ENCODE measurements at regions of chr3 and their contacts with region 1.

Region 1: GRCh38 chr3:114152519-114153151 is 26.2 kb downstream of the DRD3 start:
- DNase-seq: peak; percentile 70 to 76
- ATAC-seq: peak; percentile 81 to 87
- H3K4me3 ChIP-seq: peak overlapping the region; percentile 42
- H3K27ac ChIP-seq: peak overlapping the region; percentile 67 to 84
- H3K4me1 ChIP-seq: no peaks in the 10 kb centered on the region
- CTCF ChIP-seq: peak; percentile 89
- EP300 ChIP-seq: no peak
- POLR2A ChIP-seq: no peak
- RAD21 ChIP-seq: peak; percentile 86 to 90

Region 2: GRCh38 chr3:114168150-114168549 is 15.5 kb after region 1 on chr3:
- CTCF ChIA-PET with region 1: interaction called, 27 read pairs
- POLR2A ChIA-PET with region 1: no interaction called
- DNase-seq: no peak
- ATAC-seq: no peak
- H3K4me3 ChIP-seq: no peak overlapping the region
- H3K27ac ChIP-seq: no peak overlapping the region
- H3K4me1 ChIP-seq: no peaks in the 10 kb centered on the region
- CTCF ChIP-seq: no peak
- EP300 ChIP-seq: no peak
- POLR2A ChIP-seq: no peak
- RAD21 ChIP-seq: no peak

Region 3: DNA sequence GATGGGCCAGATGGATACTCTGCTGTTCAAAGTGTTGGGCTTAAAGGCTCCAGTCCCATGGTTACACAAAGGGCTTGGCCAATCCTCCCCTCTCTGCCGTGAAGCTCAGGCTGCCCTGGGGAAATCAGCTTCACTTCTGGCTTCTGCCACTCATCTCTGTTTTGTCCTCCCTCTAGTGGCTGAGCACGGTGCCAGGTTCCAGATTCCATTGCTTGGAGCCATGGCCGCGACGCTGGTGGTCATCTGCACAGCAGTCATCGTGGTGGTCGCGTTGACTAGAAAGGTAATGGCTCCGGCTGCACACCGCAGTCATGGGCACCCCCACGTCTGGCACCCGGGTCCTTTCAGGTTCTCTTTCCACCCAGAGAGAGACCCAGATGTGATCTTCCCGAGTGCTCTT is 146.8 kb after region 1 on chr3:
- CTCF ChIA-PET with region 1: interaction called, 11 read pairs
- POLR2A ChIA-PET with region 1: no interaction called
- DNase-seq: peak; percentile 58 to 79
- ATAC-seq: peak; percentile 95 to 99
- H3K4me3 ChIP-seq: 0 out of 3 replicates have a peak overlapping the region, but pooled peaks have one; percentile 8
- H3K27ac ChIP-seq: 0 out of 6 replicates have a peak overlapping the region, but pooled peaks of 1 of the 2 experiments have one; percentile 40
- H3K4me1 ChIP-seq: no peaks in the 10 kb centered on the region
- CTCF ChIP-seq: peak; percentile 58
- EP300 ChIP-seq: no peak
- POLR2A ChIP-seq: no peak
- RAD21 ChIP-seq: peak; percentile 48; a peak in 3 of 5 replicates